ENCODE measurements at regions of chr6 and their contacts with region 1.

Region 1: DNA sequence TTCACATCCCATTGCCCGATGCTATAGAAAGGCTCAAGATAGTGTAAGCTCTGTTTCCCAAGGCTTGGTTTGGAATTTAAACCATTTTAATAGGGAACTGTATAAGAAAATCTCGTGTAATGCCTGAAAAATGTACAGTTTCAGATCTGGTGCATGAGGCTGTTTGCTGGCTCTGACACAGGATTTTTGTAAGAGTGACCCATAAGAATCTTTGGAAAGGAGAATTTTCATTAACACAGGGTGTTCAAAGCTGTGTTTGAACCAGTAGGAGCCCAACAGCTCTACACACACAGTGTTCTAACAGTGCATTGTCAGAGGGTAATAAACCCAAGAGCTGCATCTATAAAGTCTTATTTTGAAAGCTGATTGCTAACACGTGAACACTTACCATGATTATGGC is 293.5 kb downstream of the PRL start:
- DNase-seq: no peak
- ATAC-seq: no peak
- H3K4me3 ChIP-seq: no peak overlapping the region
- H3K27ac ChIP-seq: no peak overlapping the region
- H3K4me1 ChIP-seq: peaks cover 0 to 33% (median 15%) of the 10 kb centered on the region in 9 donors
- H3K27me3 ChIP-seq: no peaks in the 10 kb centered on the region
- CTCF ChIP-seq: no peak

Region 2: GRCh38 chr6:22062807-22063408 is 59.6 kb after region 1 on chr6:
- intact Hi-C with region 1: loop called in 1 of 10 experiments (anchors 10 kb)
- DNase-seq: no peak
- ATAC-seq: peak in 7 of 8 donors; percentile 26 to 62 (median 45)
- H3K4me3 ChIP-seq: peak overlapping the region in 1 of 10 donors; percentile 6
- H3K27ac ChIP-seq: peak overlapping the region in 3 of 10 donors; percentile 1 to 52 (median 28)
- H3K4me1 ChIP-seq: peaks cover 0 to 32% (median 16%) of the 10 kb centered on the region in 9 donors
- H3K27me3 ChIP-seq: no peaks in the 10 kb centered on the region
- CTCF ChIP-seq: no peak

Measured in heart right ventricle (tissue), 16 donors.